Caco-2 (cell line): ENCODE measurements at regions of chr15 and their contacts with region 1.

Region 1: GRCh38 chr15:60362321-60363086 is 35.3 kb downstream of the ANXA2 start:
- DNase-seq: no peak
- H3K4me3 ChIP-seq: no peak overlapping the region
- H3K4me3 Mint-ChIP-seq: peak overlapping the region; percentile 6
- H3K27ac Mint-ChIP-seq: peak overlapping the region; percentile 38
- H3K4me1 ChIP-seq: peaks cover 46% of the 10 kb centered on the region
- H3K4me1 Mint-ChIP-seq: peaks cover 16% of the 10 kb centered on the region
- H3K27me3 ChIP-seq: no peaks in the 10 kb centered on the region
- H3K27me3 Mint-ChIP-seq: no peaks in the 10 kb centered on the region
- CTCF ChIP-seq: no peak

Region 2: GRCh38 chr15:60444289-60444912 is 81.9 kb after region 1 on chr15:
- CTCF ChIA-PET with region 1: no interaction called
- POLR2A ChIA-PET with region 1: no interaction called
- intact Hi-C with region 1: loop called (anchors 2 kb)
- DNase-seq: no peak
- H3K4me3 ChIP-seq: no peak overlapping the region
- H3K4me3 Mint-ChIP-seq: no peak overlapping the region
- H3K27ac Mint-ChIP-seq: no peak overlapping the region
- H3K4me1 ChIP-seq: no peaks in the 10 kb centered on the region
- H3K4me1 Mint-ChIP-seq: peaks cover 16% of the 10 kb centered on the region
- H3K27me3 ChIP-seq: no peaks in the 10 kb centered on the region
- H3K27me3 Mint-ChIP-seq: no peaks in the 10 kb centered on the region
- CTCF ChIP-seq: peak; percentile 32 to 54

Region 3: GRCh38 chr15:60520825-60521368 is 158.4 kb after region 1 on chr15:
- CTCF ChIA-PET with region 1: interaction called, 4 read pairs
- POLR2A ChIA-PET with region 1: no interaction called
- intact Hi-C with region 1: loop called (anchors 2 kb)
- DNase-seq: peak; percentile 60 to 78
- H3K4me3 ChIP-seq: no peak overlapping the region
- H3K4me3 Mint-ChIP-seq: no peak overlapping the region
- H3K27ac Mint-ChIP-seq: no peak overlapping the region
- H3K4me1 ChIP-seq: no peaks in the 10 kb centered on the region
- H3K4me1 Mint-ChIP-seq: peaks cover 11% of the 10 kb centered on the region
- H3K27me3 ChIP-seq: no peaks in the 10 kb centered on the region
- H3K27me3 Mint-ChIP-seq: no peaks in the 10 kb centered on the region
- CTCF ChIP-seq: peak; percentile 83 to 86